Dendritic cell treated with granulocyte-macrophage colony-stimulating factor and Interleukin-4, amounts not matched to agents 40 ng/mL and 50 ng/mL, for 4 days (primary cell): ENCODE measurements at regions of chr1 and their contacts with region 1.

Region 1: GRCh38 chr1:152533327-152533938 is 19.2 kb downstream of the CRCT1 start:
- H3K4me3 Mint-ChIP-seq: no peak overlapping the region
- H3K27ac Mint-ChIP-seq: no peak overlapping the region
- H3K4me1 Mint-ChIP-seq: no peaks in the 10 kb centered on the region
- H3K27me3 Mint-ChIP-seq: peaks cover 11% of the 10 kb centered on the region

Region 2: GRCh38 chr1:152185544-152186391 is 347.7 kb before region 1 on chr1:
- intact Hi-C with region 1: no loop called
- H3K4me3 Mint-ChIP-seq: no peak overlapping the region
- H3K27ac Mint-ChIP-seq: no peak overlapping the region
- H3K4me1 Mint-ChIP-seq: peaks cover 7% of the 10 kb centered on the region
- H3K27me3 Mint-ChIP-seq: peaks cover 21% of the 10 kb centered on the region

Region 3: GRCh38 chr1:152495066-152495675 is 38.3 kb before region 1 on chr1:
- intact Hi-C with region 1: loop called (anchors 2 kb)
- H3K4me3 Mint-ChIP-seq: no peak overlapping the region
- H3K27ac Mint-ChIP-seq: no peak overlapping the region
- H3K4me1 Mint-ChIP-seq: no peaks in the 10 kb centered on the region
- H3K27me3 Mint-ChIP-seq: peaks cover 1% of the 10 kb centered on the region